ENCODE measurements at regions of chr17 and their contacts with region 1.

Region 1: DNA sequence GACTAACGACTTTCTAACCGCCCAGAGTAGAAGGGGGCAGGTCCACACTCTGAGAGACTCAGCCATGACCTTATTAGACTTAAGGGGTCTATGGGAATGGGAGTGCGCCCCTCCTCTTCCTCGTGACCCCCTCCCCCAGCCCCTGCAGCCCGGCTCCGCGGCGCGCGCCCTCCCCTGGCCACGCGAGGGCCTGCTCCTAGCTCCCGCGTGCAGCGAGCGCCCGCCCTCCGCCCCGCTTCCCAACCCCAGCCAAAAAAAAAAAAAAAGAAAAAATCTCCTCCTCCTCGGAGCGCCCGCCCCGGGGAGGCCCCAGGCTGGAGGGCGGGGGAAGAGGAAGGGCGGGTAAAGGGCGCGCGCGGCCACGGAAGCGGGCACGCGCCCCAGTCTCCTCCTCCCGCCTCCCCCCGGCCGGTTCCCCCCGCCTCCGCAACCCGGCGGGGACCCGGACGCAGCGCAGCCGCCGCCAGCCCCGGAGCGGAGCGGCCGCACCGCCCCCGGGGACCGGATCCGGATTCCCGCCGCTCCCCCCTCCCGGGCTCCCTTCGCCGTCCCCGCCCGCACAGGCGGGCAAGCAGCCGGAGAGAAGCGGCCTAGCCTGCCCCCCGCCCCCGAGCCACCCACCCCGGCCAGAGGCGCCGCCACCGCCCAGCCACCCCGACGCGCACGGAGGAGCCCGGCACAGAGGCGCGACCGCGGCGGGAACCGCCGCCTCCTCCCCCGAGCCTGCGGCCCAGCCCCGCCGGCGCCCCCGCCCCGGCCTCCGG is 949 bp downstream of the UBTF start:
- DNase-seq: peak; percentile 45 to 92
- H3K4me3 ChIP-seq: peak overlapping the region; percentile 88 to 95
- H3K27ac ChIP-seq: peak overlapping the region; percentile 91 to 99
- H3K4me1 ChIP-seq: peaks cover 17 to 18% of the 10 kb centered on the region in 2 donors
- H3K27me3 ChIP-seq: no peaks in the 10 kb centered on the region
- CTCF ChIP-seq: peak in 2 of 3 experiments; percentile 79 to 82

Region 2: GRCh38 chr17:44199553-44200477 is 18.7 kb before region 1 on chr17 and contains the start of gene ATXN7L3:
- intact Hi-C with region 1: loop called (anchors 1 kb)
- DNase-seq: peak; percentile 94 to 99
- H3K4me3 ChIP-seq: peak within 1 kb of the TSS; percentile 98 to 99
- H3K27ac ChIP-seq: peak within 1 kb of the TSS; percentile 98 to 100
- H3K4me1 ChIP-seq: peaks cover 0 to 21% of the 10 kb centered on the region in 2 donors
- H3K27me3 ChIP-seq: no peaks in the 10 kb centered on the region
- CTCF ChIP-seq: no peak
- total RNA-seq, gene ATXN7L3: 62.8 TPM

Region 3: DNA sequence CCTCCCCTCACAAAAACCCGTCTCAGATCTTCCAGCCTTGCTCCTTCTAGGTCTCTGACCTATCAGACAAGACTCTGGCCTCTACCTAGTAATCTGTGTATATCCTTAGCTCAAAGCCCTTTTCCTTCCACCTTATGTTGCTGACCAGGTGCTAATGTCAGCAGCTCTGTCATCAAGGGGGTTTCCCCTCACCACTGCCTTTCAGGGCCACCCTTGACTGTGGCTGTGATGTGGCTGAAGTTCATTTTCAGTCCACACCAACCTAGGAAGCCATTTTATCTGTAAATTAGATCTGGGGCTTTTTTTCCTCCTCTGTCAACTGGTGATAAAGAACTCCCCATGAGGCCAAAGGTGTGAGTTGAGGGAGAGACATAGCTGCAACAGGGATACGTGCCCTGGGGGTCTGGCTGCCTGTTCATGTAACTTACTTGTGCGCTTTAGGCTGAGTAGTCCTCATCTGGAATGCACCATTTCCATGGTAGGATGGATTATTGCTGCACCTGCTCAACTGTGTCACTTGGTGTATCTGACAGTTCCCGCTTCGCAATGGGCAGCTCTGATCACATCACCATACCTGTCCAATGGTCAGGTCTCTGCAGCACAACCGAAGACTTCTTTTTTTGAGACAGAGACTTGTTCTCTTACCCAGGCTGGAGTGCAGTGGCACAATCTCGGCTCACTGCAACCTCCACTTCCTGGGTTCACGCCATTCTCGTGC is 75.1 kb after region 1 on chr17:
- intact Hi-C with region 1: no loop called
- DNase-seq: no peak
- H3K4me3 ChIP-seq: no peak overlapping the region
- H3K27ac ChIP-seq: no peak overlapping the region
- H3K4me1 ChIP-seq: no peaks in the 10 kb centered on the region
- H3K27me3 ChIP-seq: no peaks in the 10 kb centered on the region
- CTCF ChIP-seq: no peak

Region 4: DNA sequence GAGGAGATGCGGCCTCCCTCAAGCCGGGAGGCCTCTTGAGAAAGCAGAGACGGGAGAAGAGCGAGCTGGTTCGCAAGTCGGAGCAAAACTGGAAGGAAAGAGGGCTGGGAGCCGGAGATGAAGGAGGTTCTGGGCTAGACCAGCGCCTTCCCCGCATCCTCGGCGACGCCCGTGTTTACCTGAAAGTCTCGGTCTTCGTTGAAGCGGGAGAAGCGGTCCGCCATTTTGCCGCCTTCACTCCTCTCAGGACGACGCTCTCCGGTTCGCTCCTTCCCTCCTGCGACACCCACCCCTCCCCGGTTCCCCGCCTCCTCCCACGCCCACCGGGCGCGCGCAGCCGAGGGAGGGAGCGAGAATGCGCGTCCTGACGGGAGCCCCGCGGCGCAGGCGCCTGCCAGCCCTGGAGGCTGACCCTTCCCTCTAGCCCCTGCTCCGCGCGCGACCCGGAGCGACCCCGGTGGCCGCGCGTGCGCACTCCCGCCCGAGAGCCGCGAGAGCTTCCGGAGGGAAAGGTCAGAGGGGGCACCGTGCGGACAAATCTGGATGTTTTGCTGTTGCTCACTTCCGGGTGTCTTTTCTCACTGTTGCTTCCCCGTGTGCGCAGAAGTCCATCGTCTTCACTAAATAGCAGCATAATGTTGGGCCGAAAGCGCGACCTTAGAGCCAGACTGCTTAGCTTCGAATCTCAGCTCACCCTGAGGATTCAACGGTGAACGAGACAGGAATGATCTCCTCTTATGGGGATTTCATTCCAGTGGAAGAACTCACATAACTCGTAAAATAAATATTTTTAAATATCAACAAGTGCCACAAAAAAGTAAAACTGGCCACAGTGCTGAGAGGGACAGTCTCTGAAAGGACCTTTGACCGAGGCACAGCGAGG is 284.9 kb after region 1 on chr17 and contains the start of gene GPATCH8:
- intact Hi-C with region 1: loop called (anchors 10 kb)
- DNase-seq: peak; percentile 77 to 96
- H3K4me3 ChIP-seq: peak within 1 kb of the TSS; percentile 68 to 90
- H3K27ac ChIP-seq: peak within 1 kb of the TSS; percentile 88 to 91
- H3K4me1 ChIP-seq: peaks cover 0 to 14% of the 10 kb centered on the region in 2 donors
- H3K27me3 ChIP-seq: no peaks in the 10 kb centered on the region
- CTCF ChIP-seq: no peak
- total RNA-seq, gene GPATCH8: 13.3 TPM